Right cardiac atrium (tissue), 5 donors: ENCODE measurements at regions of chr11 and their contacts with region 1.

Region 1: DNA sequence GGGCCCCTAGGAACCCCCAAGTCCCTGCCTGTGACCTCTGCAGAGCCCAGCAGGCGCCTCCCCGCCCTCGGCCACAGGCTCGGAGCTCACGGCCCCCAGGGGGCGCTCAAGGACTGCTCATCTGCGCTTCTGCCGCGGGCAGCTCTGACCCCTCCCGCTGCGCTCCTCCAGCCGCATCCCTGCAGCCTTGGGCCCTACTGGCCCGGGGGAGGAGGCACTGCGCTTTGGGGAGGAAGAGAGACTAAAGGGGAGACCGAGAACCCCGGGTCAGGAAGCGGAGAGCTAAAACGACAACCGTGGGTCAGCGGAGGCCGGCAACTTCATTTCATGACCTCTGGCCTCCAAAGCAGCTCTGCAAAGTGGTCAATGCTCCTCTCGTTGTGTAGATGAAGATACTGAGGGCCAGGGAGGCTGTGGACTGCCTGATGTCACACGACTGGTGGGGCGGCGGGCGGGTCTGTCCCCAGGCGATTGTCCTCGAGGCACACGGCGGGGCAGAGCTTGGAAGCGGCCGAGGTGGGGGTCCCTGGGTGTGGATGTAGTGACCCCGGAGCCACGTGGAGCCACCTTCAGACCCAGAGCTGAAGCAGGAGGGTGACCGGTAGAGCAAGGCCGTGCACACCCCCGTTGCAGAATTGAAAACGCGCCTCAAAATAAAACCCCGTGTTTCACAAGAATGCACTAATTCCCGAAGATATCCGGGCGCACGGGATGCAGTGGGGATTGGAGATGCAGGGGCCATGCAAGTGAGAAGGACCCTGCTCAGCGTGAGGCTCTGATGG is 2.7 kb upstream of the KRTAP5-6 start:
- DNase-seq: peak; percentile 87 to 96 (median 96)
- ATAC-seq: peak; percentile 95
- H3K4me3 ChIP-seq: no peak overlapping the region
- H3K27ac ChIP-seq: no peak overlapping the region
- H3K4me1 ChIP-seq: no peaks in the 10 kb centered on the region
- H3K27me3 ChIP-seq: no peaks in the 10 kb centered on the region

Region 2: DNA sequence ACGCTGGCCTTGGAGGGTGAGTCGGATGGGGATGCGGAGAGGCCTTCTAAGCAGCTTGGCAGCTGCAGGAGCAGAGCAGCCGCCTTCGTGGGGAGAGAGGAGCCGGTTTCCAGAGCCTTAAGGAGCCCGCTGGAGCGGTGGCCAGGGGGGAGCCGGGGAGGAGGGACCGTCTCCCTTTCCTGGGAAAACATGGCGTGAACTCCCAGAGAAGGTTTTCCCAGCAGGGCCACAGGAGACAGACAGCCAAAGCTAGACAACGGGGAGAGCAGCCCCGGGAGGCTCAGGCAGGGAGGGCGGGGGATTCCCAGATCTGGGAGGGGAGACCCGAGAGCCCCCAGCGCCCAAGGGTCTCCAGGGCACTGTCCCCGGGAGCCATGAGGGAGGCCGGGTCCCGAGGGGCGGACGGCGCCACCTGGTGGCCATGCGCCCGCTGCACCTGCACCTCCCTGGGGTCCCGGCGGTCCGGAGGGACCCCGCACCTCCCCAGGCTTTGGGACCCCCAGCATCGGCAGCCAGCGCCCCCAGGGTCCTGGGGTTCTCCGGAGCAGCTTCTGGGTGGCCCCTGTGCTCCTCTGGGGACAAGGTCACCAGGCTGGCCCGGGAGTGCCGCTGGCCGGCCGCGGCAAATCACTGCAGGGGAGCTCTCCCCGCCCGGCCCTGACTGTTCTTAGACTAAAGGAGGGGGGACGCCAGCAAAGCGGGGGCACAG is 138.1 kb after region 1 on chr11:
- intact Hi-C with region 1: loop called (anchors 2 to 5 kb)
- DNase-seq: peak; percentile 56 to 85 (median 84)
- ATAC-seq: peak; percentile 65 to 71
- H3K4me3 ChIP-seq: no peak overlapping the region
- H3K27ac ChIP-seq: no peak overlapping the region
- H3K4me1 ChIP-seq: peaks cover 2% of the 10 kb centered on the region
- H3K27me3 ChIP-seq: no peaks in the 10 kb centered on the region